ENCODE measurements at regions of chr2 and their contacts with region 1.

Region 1: DNA sequence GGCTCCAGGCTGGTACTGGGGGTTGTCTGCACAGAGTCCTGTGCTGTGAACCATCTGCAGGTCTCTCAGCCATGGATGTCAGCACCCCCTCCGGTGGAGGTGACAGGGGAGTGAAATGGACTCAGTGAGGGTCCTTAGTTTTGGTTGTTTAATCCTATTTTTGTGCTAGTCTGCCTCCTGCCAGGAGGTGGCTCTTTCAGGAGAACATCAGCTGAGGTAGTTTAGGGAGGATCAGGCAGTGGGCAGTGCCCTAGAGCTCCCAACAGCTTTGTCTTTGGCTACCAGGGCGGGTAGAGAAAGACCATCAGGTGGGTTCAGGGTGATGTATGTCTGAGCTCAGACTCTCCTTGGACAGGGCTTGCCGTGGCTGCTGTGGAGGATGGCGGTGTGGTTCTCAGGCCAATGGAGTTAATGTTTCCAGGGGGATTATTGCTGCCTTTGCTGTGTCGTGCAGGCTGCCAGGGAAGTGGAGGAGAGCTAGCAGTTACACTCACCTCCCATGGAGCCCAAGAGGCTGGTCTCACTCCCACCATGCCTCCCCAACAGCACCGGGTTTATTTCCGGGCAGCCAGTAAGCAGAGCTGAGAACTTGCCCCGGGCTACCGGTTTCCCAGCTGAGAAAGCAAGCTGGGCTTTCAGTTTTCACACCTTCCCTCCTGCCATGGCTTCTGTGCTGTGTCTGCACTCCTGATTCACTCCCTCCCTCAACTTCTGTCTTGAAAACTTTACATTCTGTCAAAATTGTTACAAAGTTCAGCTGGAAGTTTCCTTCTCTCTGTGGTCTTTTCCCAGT is 563.4 kb downstream of the XIRP2 start:
- DNase-seq: no peak
- H3K4me3 ChIP-seq: no peak overlapping the region
- H3K27ac ChIP-seq: no peak overlapping the region
- H3K4me1 ChIP-seq: no peaks in the 10 kb centered on the region
- H3K27me3 ChIP-seq: no peaks in the 10 kb centered on the region
- CTCF ChIP-seq: no peak
- EP300 ChIP-seq: no peak
- POLR2A ChIP-seq: no peak

Region 2: DNA sequence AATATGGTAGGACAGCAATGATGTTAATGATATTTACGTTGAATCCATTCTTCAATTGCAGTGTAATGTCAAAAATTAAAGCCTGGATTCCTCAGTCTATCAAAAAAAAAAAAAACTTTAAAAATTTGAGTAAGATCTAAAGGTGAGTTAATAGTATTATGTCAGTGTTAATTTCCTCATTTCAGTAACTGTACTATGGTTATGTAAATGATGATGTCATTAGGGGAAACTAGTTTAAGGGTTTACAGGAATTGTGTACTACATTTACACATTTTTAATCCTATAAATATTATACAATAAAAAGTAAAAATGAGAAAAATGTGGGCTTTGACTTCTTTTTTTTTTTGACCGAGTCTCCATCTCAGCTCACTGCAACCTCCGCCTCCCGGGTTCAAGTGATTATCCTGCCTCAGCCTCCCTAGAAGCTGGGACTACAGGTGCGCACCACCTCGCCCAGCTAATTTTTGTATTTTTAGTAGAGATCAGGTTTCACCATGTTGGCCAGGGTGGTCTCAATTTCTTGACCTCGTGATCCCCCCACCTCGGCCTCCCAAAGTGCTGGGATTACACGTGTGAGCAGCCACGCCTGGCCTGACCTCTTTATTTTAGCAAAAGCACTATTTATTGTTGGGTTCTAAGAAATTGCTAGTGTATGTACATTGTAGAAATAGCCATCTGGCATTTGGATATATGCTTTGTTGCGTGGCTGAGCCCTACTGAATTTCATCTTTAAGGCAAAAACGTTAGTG is 456.9 kb before region 1 on chr2:
- intact Hi-C with region 1: no loop called
- DNase-seq: no peak
- H3K4me3 ChIP-seq: no peak overlapping the region
- H3K27ac ChIP-seq: no peak overlapping the region
- H3K4me1 ChIP-seq: no peaks in the 10 kb centered on the region
- H3K27me3 ChIP-seq: no peaks in the 10 kb centered on the region
- CTCF ChIP-seq: no peak
- EP300 ChIP-seq: no peak
- POLR2A ChIP-seq: no peak

Region 3: GRCh38 chr2:167438206-167438605 is 13.5 kb before region 1 on chr2:
- intact Hi-C with region 1: loop called in 1 of 4 experiments (anchors 1 kb)
- DNase-seq: no peak
- H3K4me3 ChIP-seq: no peak overlapping the region
- H3K27ac ChIP-seq: no peak overlapping the region
- H3K4me1 ChIP-seq: no peaks in the 10 kb centered on the region
- H3K27me3 ChIP-seq: no peaks in the 10 kb centered on the region
- CTCF ChIP-seq: no peak
- EP300 ChIP-seq: no peak
- POLR2A ChIP-seq: no peak